Endothelial cell of umbilical vein (primary cell): ENCODE measurements at regions of chr7 and their contacts with region 1.

Region 1: GRCh38 chr7:94154858-94155257 is 150.7 kb upstream of the BET1 start:
- DNase-seq: no peak
- H3K4me3 ChIP-seq: no peak overlapping the region
- H3K27ac ChIP-seq: no peak overlapping the region
- H3K4me1 ChIP-seq: peaks cover 25% of the 10 kb centered on the region
- H3K27me3 ChIP-seq: no peaks in the 10 kb centered on the region
- CTCF ChIP-seq: no peak
- POLR2A ChIP-seq: no peak

Region 2: DNA sequence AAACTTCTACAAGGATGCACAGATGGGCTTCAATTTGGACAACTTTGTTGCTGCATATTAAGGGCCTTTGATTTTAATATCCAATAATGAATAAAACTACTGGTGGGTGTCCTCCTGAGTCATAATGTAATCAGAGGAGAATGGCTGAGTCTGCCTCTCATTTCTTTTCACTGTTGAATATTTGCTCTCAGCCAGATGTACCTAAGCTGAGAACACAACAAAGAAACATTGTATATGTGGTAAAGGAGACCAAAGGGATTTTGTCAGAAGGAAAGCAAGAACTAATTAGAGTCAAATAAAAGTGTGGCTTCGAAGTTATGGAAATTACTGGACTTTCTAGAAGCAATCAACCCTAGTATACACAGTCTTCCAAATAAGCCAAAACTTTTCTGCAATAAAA is 19.7 kb before region 1 on chr7:
- CTCF ChIA-PET with region 1: interaction called, 4 read pairs
- POLR2A ChIA-PET with region 1: no interaction called
- dilution Hi-C with region 1: no loop called
- intact Hi-C with region 1: loop called (anchors 2 kb)
- DNase-seq: no peak
- H3K4me3 ChIP-seq: no peak overlapping the region
- H3K27ac ChIP-seq: no peak overlapping the region
- H3K4me1 ChIP-seq: peaks cover 2% of the 10 kb centered on the region
- H3K27me3 ChIP-seq: no peaks in the 10 kb centered on the region
- CTCF ChIP-seq: no peak
- POLR2A ChIP-seq: no peak